ENCODE measurements at regions of chr20 and their contacts with region 1.

Region 1: GRCh38 chr20:62386383-62387218 is at the start of gene RPS21:
- DNase-seq: peak; percentile 91
- ATAC-seq: peak; percentile 87
- H3K4me3 Mint-ChIP-seq: peak within 1 kb of the TSS; percentile 89
- H3K27ac Mint-ChIP-seq: peak within 1 kb of the TSS; percentile 80
- H3K4me1 Mint-ChIP-seq: peaks cover 48% of the 10 kb centered on the region
- H3K27me3 Mint-ChIP-seq: no peaks in the 10 kb centered on the region
- CTCF ChIP-seq: no peak
- total RNA-seq, gene RPS21: 2,912 and 3,555 TPM in 2 replicates

Region 2: GRCh38 chr20:62121776-62122631 is 264.6 kb before region 1 on chr20 and contains the start of gene LSM14B:
- CTCF ChIA-PET with region 1: no interaction called
- POLR2A ChIA-PET with region 1: interaction called, 3 read pairs
- intact Hi-C with region 1: loop called (anchors 1 kb)
- DNase-seq: peak; percentile 95
- ATAC-seq: peak; percentile 87
- H3K4me3 Mint-ChIP-seq: peak within 1 kb of the TSS; percentile 88
- H3K27ac Mint-ChIP-seq: peak within 1 kb of the TSS; percentile 89
- H3K4me1 Mint-ChIP-seq: peaks cover 19% of the 10 kb centered on the region
- H3K27me3 Mint-ChIP-seq: no peaks in the 10 kb centered on the region
- CTCF ChIP-seq: no peak
- total RNA-seq, gene LSM14B: 35.4 and 36.4 TPM in 2 replicates

Region 3: GRCh38 chr20:62237801-62238571 is 148.6 kb before region 1 on chr20 and contains the start of gene OSBPL2:
- CTCF ChIA-PET with region 1: no interaction called
- POLR2A ChIA-PET with region 1: no interaction called
- intact Hi-C with region 1: loop called (anchors 1 kb)
- DNase-seq: peak; percentile 100
- ATAC-seq: peak; percentile 98
- H3K4me3 Mint-ChIP-seq: peak within 1 kb of the TSS; percentile 81
- H3K27ac Mint-ChIP-seq: peak within 1 kb of the TSS; percentile 89
- H3K4me1 Mint-ChIP-seq: peaks cover 34% of the 10 kb centered on the region
- H3K27me3 Mint-ChIP-seq: no peaks in the 10 kb centered on the region
- CTCF ChIP-seq: no peak
- total RNA-seq, gene OSBPL2: 40.3 and 43.0 TPM in 2 replicates

Region 4: GRCh38 chr20:62368976-62369814 is 17.4 kb before region 1 on chr20:
- CTCF ChIA-PET with region 1: interaction called, 12 read pairs
- POLR2A ChIA-PET with region 1: interaction called, 8 read pairs
- intact Hi-C with region 1: loop called (anchors 2 kb)
- DNase-seq: no peak
- ATAC-seq: no peak
- H3K4me3 Mint-ChIP-seq: no peak overlapping the region
- H3K27ac Mint-ChIP-seq: no peak overlapping the region
- H3K4me1 Mint-ChIP-seq: peaks cover 16% of the 10 kb centered on the region
- H3K27me3 Mint-ChIP-seq: peaks cover 2% of the 10 kb centered on the region
- CTCF ChIP-seq: no peak

Region 5: GRCh38 chr20:62616728-62617621 is 230.4 kb after region 1 on chr20:
- CTCF ChIA-PET with region 1: interaction called, 5 read pairs
- POLR2A ChIA-PET with region 1: interaction called, 4 read pairs
- intact Hi-C with region 1: loop called (anchors 2 kb)
- DNase-seq: peak; percentile 73
- ATAC-seq: peak; percentile 61
- H3K4me3 Mint-ChIP-seq: peak overlapping the region; percentile 73
- H3K27ac Mint-ChIP-seq: peak overlapping the region; percentile 93
- H3K4me1 Mint-ChIP-seq: peaks cover 45% of the 10 kb centered on the region
- H3K27me3 Mint-ChIP-seq: no peaks in the 10 kb centered on the region
- CTCF ChIP-seq: peak; percentile 84

Region 6: DNA sequence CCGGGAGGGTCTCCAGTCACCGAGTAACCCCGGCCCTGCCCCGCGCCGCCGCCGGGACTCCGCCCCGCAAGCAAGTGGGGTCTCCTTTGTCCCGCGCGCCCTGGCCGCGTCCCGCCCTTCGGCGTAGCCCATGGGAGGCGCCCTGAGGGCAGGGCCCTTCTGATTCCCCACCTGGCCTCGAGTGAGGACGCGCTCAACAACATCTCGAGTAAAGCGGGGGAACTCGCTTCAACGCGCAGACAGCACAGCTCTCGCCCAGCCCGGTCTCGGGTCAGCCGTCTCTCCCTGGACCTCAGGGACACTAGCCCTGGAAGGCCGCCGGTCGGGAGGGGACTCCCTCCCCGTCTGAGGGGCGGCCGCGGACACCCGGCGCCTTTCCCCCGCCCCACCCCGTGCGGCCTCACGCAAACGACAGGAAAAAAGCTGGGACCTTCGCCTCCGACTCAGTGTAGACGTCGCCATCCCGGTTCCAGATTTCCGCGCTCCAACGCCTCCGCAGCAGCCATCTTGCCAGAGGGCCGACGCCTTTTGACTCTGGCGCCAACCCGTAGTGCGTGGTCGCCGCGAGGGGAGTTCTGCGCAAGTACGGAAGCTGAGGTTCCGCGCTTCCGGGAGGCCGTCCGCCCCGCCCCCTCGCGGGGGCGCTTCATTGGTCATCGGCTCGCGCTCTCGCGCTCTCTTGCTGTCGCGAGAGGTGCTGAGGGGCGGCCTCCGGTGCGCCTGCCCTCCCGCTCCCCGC is 550.9 kb after region 1 on chr20:
- CTCF ChIA-PET with region 1: no interaction called
- POLR2A ChIA-PET with region 1: no interaction called
- intact Hi-C with region 1: loop called (anchors 10 kb)
- DNase-seq: peak; percentile 97
- ATAC-seq: peak; percentile 88
- H3K4me3 Mint-ChIP-seq: peak overlapping the region; percentile 94
- H3K27ac Mint-ChIP-seq: peak overlapping the region; percentile 94
- H3K4me1 Mint-ChIP-seq: peaks cover 42% of the 10 kb centered on the region
- H3K27me3 Mint-ChIP-seq: no peaks in the 10 kb centered on the region
- CTCF ChIP-seq: no peak

Measured in activated B cell treated with CpG ODN at 0.5 μM for 24 hours (primary cell).